ENCODE measurements at regions of chr6 and their contacts with region 1.

Region 1: DNA sequence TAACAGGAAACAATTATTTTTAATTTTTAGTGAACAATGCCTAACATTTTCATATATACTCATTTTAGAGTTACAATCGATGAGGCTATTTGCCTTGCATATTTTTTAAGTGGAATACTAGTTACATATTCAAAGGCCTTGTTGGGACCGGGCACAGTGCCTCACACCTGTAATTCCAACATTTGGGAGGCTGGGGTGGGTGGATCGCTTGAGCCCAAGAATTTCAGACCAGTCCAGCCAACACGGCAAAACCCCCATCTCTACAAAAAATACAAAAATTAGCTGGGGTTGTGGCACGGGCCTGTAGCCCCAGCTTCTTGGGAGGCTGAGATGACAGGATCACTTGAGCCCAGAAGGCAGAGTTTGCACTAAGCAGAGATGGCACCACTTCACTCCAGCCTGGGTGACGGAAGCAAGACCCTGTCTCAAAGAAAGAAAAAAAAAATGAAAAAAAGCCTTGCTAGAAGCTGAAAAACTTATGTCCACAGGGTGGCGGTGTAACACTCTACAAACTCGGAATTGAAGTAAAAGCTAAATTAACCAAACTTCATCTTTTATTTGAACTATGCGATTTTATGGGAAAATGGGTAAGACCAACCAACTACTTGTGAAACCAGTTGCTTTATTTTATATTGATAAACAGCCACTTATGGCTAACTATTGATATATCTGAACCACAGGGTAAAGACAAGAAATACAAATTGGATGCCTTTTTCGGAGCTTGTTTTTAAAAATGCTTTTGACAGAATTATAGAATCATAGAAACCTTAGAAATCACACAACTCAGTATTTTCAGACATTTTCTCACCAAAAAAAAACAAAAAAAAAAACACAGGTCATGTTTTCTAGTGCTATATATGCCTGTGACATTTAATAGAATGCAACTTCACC is 24.1 kb upstream of the ROS1 start:
- DNase-seq: peak; percentile 66
- H3K4me3 ChIP-seq: no peak overlapping the region
- H3K27ac ChIP-seq: no peak overlapping the region
- H3K4me1 ChIP-seq: no peaks in the 10 kb centered on the region
- H3K27me3 ChIP-seq: no peaks in the 10 kb centered on the region
- CTCF ChIP-seq: peak; percentile 72

Region 2: GRCh38 chr6:117253785-117254184 is 196.0 kb before region 1 on chr6:
- intact Hi-C with region 1: no loop called
- DNase-seq: no peak
- H3K4me3 ChIP-seq: no peak overlapping the region
- H3K27ac ChIP-seq: no peak overlapping the region
- H3K4me1 ChIP-seq: no peaks in the 10 kb centered on the region
- H3K27me3 ChIP-seq: no peaks in the 10 kb centered on the region
- CTCF ChIP-seq: no peak

Region 3: DNA sequence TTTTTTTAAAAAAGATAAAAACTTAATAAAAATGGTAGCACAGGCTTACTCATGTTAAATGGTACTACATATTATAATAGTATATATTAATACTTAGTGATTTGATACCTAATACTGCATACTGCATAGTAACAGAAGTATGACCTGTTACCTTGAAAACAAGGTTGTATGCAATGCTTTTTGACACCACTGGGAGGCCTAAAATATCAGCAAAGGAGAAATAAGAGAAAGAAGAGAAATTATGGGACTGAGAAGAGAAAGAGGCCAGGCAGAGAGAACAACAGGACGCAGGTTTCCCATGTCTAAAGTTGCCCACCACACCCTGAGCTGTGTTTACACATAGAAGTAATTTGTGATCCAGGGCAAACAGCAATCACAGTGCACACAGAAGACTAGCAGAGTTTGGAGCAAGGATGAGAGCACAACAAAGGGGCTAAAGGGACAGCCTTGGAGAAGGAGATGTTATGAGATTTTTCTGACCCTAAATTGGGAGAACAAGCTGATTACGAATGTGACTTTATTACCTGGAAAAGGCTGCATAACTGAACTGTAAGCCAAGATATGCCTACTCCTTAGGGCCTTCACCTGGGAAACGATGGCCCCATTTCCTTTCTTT is 97.2 kb before region 1 on chr6:
- intact Hi-C with region 1: loop called (anchors 10 kb)
- DNase-seq: peak; percentile 20
- H3K4me3 ChIP-seq: no peak overlapping the region
- H3K27ac ChIP-seq: no peak overlapping the region
- H3K4me1 ChIP-seq: no peaks in the 10 kb centered on the region
- H3K27me3 ChIP-seq: no peaks in the 10 kb centered on the region
- CTCF ChIP-seq: peak; percentile 53

Region 4: DNA sequence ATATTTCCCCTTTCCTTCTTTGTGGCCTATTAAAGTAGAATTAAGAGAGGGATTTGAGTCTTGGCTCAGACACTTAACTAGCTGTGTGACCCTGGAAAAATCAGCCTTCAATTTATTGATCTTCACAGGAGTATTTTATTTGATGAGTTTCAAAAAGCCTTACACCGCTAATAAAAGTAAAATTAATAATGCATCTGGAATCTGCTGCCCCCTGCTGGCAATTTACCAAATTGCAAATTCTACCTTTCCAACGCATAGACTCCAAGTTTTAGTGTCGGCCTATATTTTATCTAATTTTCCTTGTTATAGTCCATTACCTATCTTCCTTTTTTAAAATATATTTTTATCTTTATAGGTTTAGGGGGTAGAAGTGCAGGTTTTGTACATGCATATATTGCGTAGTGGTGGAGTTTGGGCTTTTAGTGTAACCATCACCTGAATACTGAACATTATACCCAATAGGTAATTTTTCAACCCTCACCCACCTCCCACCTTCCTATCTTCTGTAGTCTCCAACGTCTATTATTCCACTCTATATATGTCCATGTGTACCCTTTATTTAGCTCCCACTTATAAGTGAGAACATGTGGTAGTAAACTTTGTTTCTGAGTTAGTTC is 106.2 kb after region 1 on chr6:
- intact Hi-C with region 1: loop called (anchors 2 kb)
- DNase-seq: peak; percentile 71
- H3K4me3 ChIP-seq: no peak overlapping the region
- H3K27ac ChIP-seq: no peak overlapping the region
- H3K4me1 ChIP-seq: no peaks in the 10 kb centered on the region
- H3K27me3 ChIP-seq: no peaks in the 10 kb centered on the region
- CTCF ChIP-seq: peak; percentile 92

Region 5: DNA sequence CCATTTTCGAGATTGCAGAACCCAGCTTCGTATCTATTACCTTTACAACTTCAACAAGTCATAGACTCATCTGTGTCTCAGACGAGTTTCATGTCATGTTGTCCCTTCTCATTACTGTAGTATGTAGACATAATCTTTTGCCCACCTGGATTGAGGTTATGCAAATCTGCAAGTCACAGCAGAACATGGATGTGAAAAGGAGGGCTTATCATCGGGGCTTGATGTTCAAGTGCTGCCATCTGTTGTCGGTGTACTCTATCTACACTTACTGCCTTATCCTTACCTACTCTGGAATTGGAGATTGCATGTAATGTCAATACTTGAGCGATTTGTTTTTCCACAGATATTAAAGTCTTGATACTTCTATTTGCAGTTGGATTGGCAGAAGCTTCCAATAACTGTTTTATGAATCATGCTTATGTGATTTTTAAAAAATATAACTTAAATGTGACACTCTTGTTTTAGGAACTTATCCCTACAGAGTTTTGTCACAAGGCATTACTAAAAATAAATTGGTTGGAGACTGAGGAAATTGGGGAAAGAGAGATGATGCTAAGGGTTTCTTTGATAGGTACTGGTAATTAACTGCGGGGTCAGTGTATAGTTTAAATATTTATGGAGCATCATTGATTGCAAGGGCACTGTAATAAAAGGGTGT is 155.5 kb after region 1 on chr6:
- intact Hi-C with region 1: loop called (anchors 5 kb)
- DNase-seq: peak; percentile 57
- H3K4me3 ChIP-seq: no peak overlapping the region
- H3K27ac ChIP-seq: no peak overlapping the region
- H3K4me1 ChIP-seq: no peaks in the 10 kb centered on the region
- H3K27me3 ChIP-seq: no peaks in the 10 kb centered on the region
- CTCF ChIP-seq: peak; percentile 60